A673 (cell line): ENCODE measurements at regions of chr10 and their contacts with region 1.

Region 1: GRCh38 chr10:93288654-93289634 is 193.2 kb downstream of the MYOF start:
- DNase-seq: peak; percentile 87
- H3K4me3 ChIP-seq: no peak overlapping the region
- H3K27ac ChIP-seq: no peak overlapping the region
- H3K4me1 ChIP-seq: no peaks in the 10 kb centered on the region
- H3K27me3 ChIP-seq: no peaks in the 10 kb centered on the region
- CTCF ChIP-seq: peak; percentile 83

Region 2: GRCh38 chr10:92880233-92880861 is 408.6 kb before region 1 on chr10:
- CTCF ChIA-PET with region 1: no interaction called
- POLR2A ChIA-PET with region 1: no interaction called
- intact Hi-C with region 1: loop called (anchors 10 kb)
- DNase-seq: peak; percentile 78
- H3K4me3 ChIP-seq: no peak overlapping the region
- H3K27ac ChIP-seq: no peak overlapping the region
- H3K4me1 ChIP-seq: peaks cover 21% of the 10 kb centered on the region
- H3K27me3 ChIP-seq: no peaks in the 10 kb centered on the region
- CTCF ChIP-seq: peak; percentile 71

Region 3: GRCh38 chr10:93006435-93007039 is 282.4 kb before region 1 on chr10:
- CTCF ChIA-PET with region 1: interaction called, 10 read pairs
- POLR2A ChIA-PET with region 1: no interaction called
- intact Hi-C with region 1: no loop called
- DNase-seq: peak; percentile 62
- H3K4me3 ChIP-seq: no peak overlapping the region
- H3K27ac ChIP-seq: no peak overlapping the region
- H3K4me1 ChIP-seq: no peaks in the 10 kb centered on the region
- H3K27me3 ChIP-seq: no peaks in the 10 kb centered on the region
- CTCF ChIP-seq: peak; percentile 72

Region 4: GRCh38 chr10:93080350-93081046 is 208.4 kb before region 1 on chr10:
- CTCF ChIA-PET with region 1: interaction called, 3 read pairs
- POLR2A ChIA-PET with region 1: no interaction called
- intact Hi-C with region 1: loop called (anchors 1 kb)
- DNase-seq: peak; percentile 61
- H3K4me3 ChIP-seq: peak overlapping the region; percentile 24
- H3K27ac ChIP-seq: no peak overlapping the region
- H3K4me1 ChIP-seq: no peaks in the 10 kb centered on the region
- H3K27me3 ChIP-seq: peaks cover 30% of the 10 kb centered on the region
- CTCF ChIP-seq: peak; percentile 91

Region 5: DNA sequence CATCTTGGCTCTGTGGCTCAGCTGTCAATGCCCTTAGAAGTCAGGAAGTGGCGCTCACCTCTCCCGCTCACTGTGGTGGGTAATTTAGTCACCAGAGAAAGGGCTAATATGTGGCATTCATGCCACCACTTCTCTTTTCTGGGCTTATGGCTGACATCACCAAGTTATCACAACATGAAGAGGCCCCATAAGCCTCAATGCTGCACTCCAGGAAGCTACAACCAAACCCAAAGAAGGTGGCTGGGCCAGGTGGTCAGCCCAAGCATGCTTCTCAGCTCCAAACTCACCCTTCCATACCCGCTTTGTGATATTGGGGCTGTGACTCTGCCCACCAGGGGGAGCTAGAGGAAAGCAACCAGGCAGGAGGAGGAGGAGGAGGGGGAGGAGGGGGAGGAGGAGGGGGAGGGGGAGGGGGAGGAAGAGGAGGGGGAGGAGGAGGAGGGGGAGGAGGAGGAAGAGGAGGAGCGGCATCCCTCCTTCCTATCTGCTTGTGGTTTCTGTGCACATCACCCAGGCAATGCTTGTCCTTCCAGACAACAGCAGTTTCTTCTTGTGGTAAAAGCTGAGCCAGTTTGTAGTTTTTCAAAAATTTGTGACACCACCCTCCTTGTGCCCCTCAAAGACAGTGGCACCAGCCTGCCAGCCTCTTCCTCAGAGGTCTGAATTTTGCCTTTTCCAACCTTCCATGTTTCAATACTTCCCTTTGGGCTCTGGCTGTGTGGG is 173.1 kb before region 1 on chr10:
- CTCF ChIA-PET with region 1: no interaction called
- POLR2A ChIA-PET with region 1: no interaction called
- intact Hi-C with region 1: loop called (anchors 1 kb)
- DNase-seq: peak; percentile 76
- H3K4me3 ChIP-seq: no peak overlapping the region
- H3K27ac ChIP-seq: no peak overlapping the region
- H3K4me1 ChIP-seq: no peaks in the 10 kb centered on the region
- H3K27me3 ChIP-seq: peaks cover 7% of the 10 kb centered on the region
- CTCF ChIP-seq: peak; percentile 60

Region 6: GRCh38 chr10:93309062-93309461 is 20.1 kb after region 1 on chr10:
- CTCF ChIA-PET with region 1: no interaction called
- POLR2A ChIA-PET with region 1: interaction called, 11 read pairs
- intact Hi-C with region 1: no loop called
- DNase-seq: peak; percentile 10
- H3K4me3 ChIP-seq: no peak overlapping the region
- H3K27ac ChIP-seq: no peak overlapping the region
- H3K4me1 ChIP-seq: no peaks in the 10 kb centered on the region
- H3K27me3 ChIP-seq: no peaks in the 10 kb centered on the region
- CTCF ChIP-seq: no peak

Region 7: DNA sequence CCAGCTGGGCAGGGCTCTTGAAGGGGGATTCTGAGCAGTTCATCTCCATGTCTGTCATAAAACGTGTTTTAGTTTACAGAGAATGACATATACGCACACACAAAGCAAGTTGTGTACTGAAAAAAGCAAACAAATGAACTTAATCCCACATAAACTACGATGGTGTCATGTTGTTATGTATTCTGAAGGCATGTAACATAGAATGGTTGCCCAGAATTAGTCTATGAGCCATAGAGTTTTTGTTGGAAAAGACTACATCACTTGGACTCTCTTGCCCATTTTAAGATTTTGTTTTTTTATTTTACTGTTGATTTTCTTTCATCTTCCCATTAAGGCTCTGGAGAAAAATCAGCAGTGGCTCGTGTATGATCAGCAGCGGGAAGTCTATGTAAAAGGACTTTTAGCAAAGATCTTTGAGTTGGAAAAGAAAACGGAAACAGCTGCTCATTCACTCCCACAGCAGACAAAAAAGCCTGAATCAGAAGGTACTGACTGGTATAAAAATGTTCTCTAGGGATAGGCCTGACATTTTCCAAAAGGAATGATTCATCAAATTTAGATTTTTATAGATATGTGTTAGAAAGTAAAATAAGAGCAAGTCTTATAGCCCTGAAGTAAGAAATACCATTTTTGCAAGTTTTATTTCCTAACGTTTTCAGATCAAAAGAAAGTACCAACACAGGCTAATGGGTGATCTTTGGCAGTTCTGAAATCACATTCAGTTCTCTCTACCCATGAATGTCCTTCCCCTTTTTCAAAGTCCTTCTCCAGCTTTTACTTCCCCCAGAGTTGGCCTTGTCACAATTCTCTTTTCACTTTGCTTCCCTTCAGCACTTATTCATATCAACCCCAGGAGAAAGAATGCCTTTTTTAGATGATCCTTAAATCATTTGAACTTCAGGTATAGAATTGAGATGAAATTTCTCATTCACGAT is 226.4 kb after region 1 on chr10:
- CTCF ChIA-PET with region 1: no interaction called
- POLR2A ChIA-PET with region 1: no interaction called
- intact Hi-C with region 1: no loop called
- DNase-seq: peak; percentile 29
- H3K4me3 ChIP-seq: no peak overlapping the region
- H3K27ac ChIP-seq: no peak overlapping the region
- H3K4me1 ChIP-seq: no peaks in the 10 kb centered on the region
- H3K27me3 ChIP-seq: no peaks in the 10 kb centered on the region
- CTCF ChIP-seq: no peak